ENCODE measurements at regions of chr16 and their contacts with region 1.

Region 1: GRCh38 chr16:78122774-78123315 is 23.4 kb downstream of the WWOX start:
- DNase-seq: peak; percentile 81
- H3K4me3 ChIP-seq: no peak overlapping the region
- H3K27ac ChIP-seq: no peak overlapping the region
- H3K4me1 ChIP-seq: peaks cover 20% of the 10 kb centered on the region
- H3K27me3 ChIP-seq: no peaks in the 10 kb centered on the region
- CTCF ChIP-seq: peak; percentile 54

Region 2: GRCh38 chr16:77822661-77823060 is 300.2 kb before region 1 on chr16:
- CTCF ChIA-PET with region 1: no interaction called
- POLR2A ChIA-PET with region 1: no interaction called
- intact Hi-C with region 1: no loop called
- DNase-seq: no peak
- H3K4me3 ChIP-seq: no peak overlapping the region
- H3K27ac ChIP-seq: no peak overlapping the region
- H3K4me1 ChIP-seq: no peaks in the 10 kb centered on the region
- H3K27me3 ChIP-seq: peaks cover 4% of the 10 kb centered on the region
- CTCF ChIP-seq: no peak

Region 3: DNA sequence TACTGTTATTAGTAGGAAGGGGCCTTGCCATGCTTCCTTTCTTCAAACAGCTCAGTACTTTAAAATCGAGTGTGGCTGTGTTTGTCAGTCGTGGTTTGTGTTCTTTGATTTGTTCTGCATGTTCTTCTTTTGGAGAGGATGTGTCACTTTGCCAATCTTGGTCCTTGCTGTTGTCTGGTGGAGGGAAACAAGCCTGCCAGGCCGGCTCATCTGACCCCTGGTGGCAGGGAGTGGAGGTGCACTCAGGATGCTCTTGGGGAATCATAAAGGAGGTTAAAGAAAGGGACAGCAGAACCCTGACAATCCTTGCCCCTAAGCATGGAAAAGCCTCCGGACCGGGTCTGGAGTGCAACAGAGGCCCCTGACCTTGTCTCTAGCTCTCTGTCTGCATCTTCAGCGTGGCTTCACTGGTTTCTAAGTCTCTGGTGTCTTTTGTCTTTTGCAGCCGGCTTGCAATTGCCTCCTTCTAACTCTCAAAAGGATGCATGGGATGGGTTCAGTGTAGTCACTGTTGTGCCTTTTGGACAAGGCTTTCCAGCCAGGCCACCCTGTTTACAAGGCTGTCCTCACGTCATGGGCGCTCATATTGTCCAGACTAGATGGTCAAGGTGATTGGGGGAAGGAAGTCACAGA is 112.4 kb after region 1 on chr16:
- CTCF ChIA-PET with region 1: no interaction called
- POLR2A ChIA-PET with region 1: no interaction called
- intact Hi-C with region 1: loop called (anchors 1 kb)
- DNase-seq: peak; percentile 79
- H3K4me3 ChIP-seq: no peak overlapping the region
- H3K27ac ChIP-seq: no peak overlapping the region
- H3K4me1 ChIP-seq: no peaks in the 10 kb centered on the region
- H3K27me3 ChIP-seq: no peaks in the 10 kb centered on the region
- CTCF ChIP-seq: peak; percentile 78

Region 4: DNA sequence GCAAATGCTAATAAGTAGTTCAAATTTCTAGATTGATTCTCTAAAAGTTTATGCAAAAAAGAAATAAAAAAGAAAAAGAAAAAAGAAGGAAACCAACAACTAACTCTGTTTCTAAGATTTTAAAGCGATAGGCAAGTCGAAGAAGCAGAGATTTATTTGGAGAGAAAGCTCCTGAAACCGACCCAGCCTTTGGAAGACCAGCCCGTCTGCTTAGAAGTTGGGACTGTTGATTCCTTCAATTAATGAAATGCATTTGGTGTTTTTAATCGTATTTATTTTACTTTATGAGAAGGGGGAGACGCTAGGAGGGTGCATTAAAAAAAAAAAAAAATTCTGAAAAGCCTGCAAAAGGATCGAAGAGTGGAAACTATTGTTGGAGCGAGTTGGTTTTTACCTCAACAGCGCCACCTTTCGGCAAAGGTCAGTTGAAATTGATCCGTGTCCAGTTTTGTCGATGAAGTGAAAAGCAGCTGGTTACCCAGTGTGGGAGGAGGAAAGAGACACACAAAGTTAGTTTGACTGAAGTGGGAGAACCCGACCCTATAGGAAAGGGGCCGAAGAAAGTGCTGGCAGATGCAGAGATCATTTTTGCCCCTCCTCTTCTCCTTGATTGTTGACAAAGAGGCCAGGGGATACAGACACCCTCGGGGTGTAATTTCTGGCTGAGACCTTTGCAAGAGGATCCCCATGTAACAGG is 1479.2 kb after region 1 on chr16:
- CTCF ChIA-PET with region 1: interaction called, 5 read pairs
- POLR2A ChIA-PET with region 1: no interaction called
- intact Hi-C with region 1: loop called (anchors 2 kb)
- DNase-seq: peak; percentile 70
- H3K4me3 ChIP-seq: peak overlapping the region; percentile 37
- H3K27ac ChIP-seq: no peak overlapping the region
- H3K4me1 ChIP-seq: peaks cover 16% of the 10 kb centered on the region
- H3K27me3 ChIP-seq: peaks cover 73% of the 10 kb centered on the region
- CTCF ChIP-seq: peak; percentile 81

Measured in A673 (cell line).